ENCODE measurements at regions of chr5 and their contacts with region 1.

Region 1: GRCh38 chr5:103808464-103809106 is 246.0 kb upstream of the NUDT12 start:
- DNase-seq: peak; percentile 50
- ATAC-seq: peak; percentile 90
- H3K4me3 ChIP-seq: no peak overlapping the region
- H3K27ac ChIP-seq: no peak overlapping the region
- H3K4me1 ChIP-seq: no peaks in the 10 kb centered on the region
- H3K27me3 ChIP-seq: no peaks in the 10 kb centered on the region
- CTCF ChIP-seq: peak; percentile 92
- POLR2A ChIP-seq: no peak
- RAD21 ChIP-seq: peak; percentile 93

Region 2: GRCh38 chr5:103582364-103582763 is 226.2 kb before region 1 on chr5:
- CTCF ChIA-PET with region 1: interaction called, 3 read pairs
- POLR2A ChIA-PET with region 1: no interaction called
- dilution Hi-C with region 1: no loop called
- in situ Hi-C with region 1: no loop called
- intact Hi-C with region 1: loop called (anchors 2 kb)
- DNase-seq: peak; percentile 50
- ATAC-seq: no peak
- H3K4me3 ChIP-seq: no peak overlapping the region
- H3K27ac ChIP-seq: no peak overlapping the region
- H3K4me1 ChIP-seq: no peaks in the 10 kb centered on the region
- H3K27me3 ChIP-seq: no peaks in the 10 kb centered on the region
- CTCF ChIP-seq: peak; percentile 56
- POLR2A ChIP-seq: no peak
- RAD21 ChIP-seq: peak; percentile 59

Region 3: GRCh38 chr5:104178829-104179456 is 370.4 kb after region 1 on chr5:
- CTCF ChIA-PET with region 1: interaction called, 8 read pairs
- POLR2A ChIA-PET with region 1: no interaction called
- dilution Hi-C with region 1: no loop called
- in situ Hi-C with region 1: loop called (anchors 5 kb)
- intact Hi-C with region 1: loop called (anchors 1 kb)
- DNase-seq: peak; percentile 63
- ATAC-seq: peak; percentile 83
- H3K4me3 ChIP-seq: no peak overlapping the region
- H3K27ac ChIP-seq: no peak overlapping the region
- H3K4me1 ChIP-seq: no peaks in the 10 kb centered on the region
- H3K27me3 ChIP-seq: no peaks in the 10 kb centered on the region
- CTCF ChIP-seq: peak; percentile 73
- POLR2A ChIP-seq: no peak
- RAD21 ChIP-seq: peak; percentile 90

Region 4: GRCh38 chr5:104412649-104413246 is 604.2 kb after region 1 on chr5:
- CTCF ChIA-PET with region 1: no interaction called
- POLR2A ChIA-PET with region 1: no interaction called
- dilution Hi-C with region 1: no loop called
- in situ Hi-C with region 1: loop called (anchors 25 kb)
- intact Hi-C with region 1: loop called (anchors 5 kb)
- DNase-seq: peak; percentile 17
- ATAC-seq: peak; percentile 78
- H3K4me3 ChIP-seq: no peak overlapping the region
- H3K27ac ChIP-seq: no peak overlapping the region
- H3K4me1 ChIP-seq: no peaks in the 10 kb centered on the region
- H3K27me3 ChIP-seq: no peaks in the 10 kb centered on the region
- CTCF ChIP-seq: peak; percentile 28
- POLR2A ChIP-seq: no peak
- RAD21 ChIP-seq: no peak